GM18951 (cell line): ENCODE measurements at regions of chr1 and their contacts with region 1.

Region 1: DNA sequence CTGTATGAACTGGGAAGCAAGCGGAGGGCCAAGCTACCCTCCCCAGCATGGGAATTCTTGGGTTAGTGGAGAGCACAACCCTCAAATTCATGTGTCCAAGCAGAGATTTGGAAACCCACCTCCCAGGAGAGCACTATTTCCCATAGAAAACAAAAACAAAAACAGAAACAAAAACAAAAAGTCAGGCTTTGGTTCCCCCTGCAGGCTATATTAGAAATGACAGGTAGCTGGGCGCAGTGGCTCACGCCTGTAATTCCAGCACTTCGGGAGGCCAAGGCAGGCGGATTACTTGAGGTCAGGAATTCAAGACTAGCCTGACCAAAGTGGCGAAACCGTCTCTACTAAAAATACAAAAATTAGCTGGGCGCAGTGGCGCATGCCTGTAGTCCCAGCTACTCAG is 10.8 kb downstream of the MINDY1 start:
- POLR2A ChIP-seq: no peak

Region 2: DNA sequence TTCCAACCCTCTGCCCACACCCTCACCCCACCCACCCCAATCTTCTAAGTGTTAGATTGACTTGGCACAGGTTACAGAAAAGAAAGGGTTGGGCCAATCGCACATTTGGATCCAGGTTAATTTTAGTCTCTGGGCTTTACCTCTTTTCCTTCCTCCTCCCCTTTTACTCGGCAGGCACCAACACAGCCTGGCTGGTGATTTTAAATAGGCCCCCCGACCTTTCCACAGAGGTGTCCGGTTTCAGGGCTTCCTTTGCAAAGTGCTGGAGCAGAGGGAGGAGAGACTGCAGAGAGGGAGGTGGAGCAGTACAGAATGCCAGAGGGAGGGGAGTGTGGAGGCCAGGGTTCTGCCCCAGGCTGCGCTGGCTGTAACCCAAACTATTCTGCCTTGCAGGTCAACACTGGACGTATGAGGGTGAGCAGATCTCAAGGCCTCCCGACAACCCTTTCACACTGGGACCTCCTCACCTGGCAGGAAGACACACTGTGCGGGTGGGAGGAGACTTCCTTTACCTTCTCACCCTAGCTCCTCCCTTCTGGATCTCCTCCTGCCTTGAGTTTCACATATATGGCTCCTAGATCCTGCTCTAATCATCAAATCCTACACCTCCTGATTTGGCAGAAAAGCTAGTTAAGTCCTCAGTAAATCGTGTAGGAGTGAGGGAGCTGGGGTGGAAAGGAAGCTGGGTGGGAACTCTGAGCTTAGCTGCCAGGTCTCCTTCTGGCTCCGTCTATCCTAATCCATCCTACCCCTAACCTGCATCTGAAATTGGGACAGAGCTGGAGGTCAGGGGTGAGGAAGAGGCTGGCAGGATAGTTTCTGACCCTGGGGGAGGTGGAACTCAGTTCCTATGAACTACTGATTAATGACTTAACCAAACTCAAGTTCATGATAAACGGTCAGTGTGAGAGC is 735.9 kb before region 1 on chr1:
- in situ Hi-C with region 1: loop called (anchors 10 kb)
- POLR2A ChIP-seq: no peak